ENCODE measurements at regions of chr7 and their contacts with region 1.

Region 1: GRCh38 chr7:139777948-139778841 is at the start of gene HIPK2:
- DNase-seq: peak; percentile 87 to 92
- ATAC-seq: peak; percentile 76 to 81 (median 78)
- H3K4me3 ChIP-seq: peak within 1 kb of the TSS; percentile 95
- H3K27ac ChIP-seq: peak within 1 kb of the TSS; percentile 93
- H3K4me1 ChIP-seq: peaks cover 33% of the 10 kb centered on the region
- H3K27me3 ChIP-seq: no peaks in the 10 kb centered on the region
- CTCF ChIP-seq: no peak
- total RNA-seq, gene HIPK2: 74.7 to 166 (median 99.6) TPM

Region 2: GRCh38 chr7:139598445-139599049 is 179.6 kb before region 1 on chr7:
- intact Hi-C with region 1: no loop called
- DNase-seq: no peak
- ATAC-seq: no peak
- H3K4me3 ChIP-seq: no peak overlapping the region
- H3K27ac ChIP-seq: no peak overlapping the region
- H3K4me1 ChIP-seq: no peaks in the 10 kb centered on the region
- H3K27me3 ChIP-seq: no peaks in the 10 kb centered on the region
- CTCF ChIP-seq: no peak

Region 3: DNA sequence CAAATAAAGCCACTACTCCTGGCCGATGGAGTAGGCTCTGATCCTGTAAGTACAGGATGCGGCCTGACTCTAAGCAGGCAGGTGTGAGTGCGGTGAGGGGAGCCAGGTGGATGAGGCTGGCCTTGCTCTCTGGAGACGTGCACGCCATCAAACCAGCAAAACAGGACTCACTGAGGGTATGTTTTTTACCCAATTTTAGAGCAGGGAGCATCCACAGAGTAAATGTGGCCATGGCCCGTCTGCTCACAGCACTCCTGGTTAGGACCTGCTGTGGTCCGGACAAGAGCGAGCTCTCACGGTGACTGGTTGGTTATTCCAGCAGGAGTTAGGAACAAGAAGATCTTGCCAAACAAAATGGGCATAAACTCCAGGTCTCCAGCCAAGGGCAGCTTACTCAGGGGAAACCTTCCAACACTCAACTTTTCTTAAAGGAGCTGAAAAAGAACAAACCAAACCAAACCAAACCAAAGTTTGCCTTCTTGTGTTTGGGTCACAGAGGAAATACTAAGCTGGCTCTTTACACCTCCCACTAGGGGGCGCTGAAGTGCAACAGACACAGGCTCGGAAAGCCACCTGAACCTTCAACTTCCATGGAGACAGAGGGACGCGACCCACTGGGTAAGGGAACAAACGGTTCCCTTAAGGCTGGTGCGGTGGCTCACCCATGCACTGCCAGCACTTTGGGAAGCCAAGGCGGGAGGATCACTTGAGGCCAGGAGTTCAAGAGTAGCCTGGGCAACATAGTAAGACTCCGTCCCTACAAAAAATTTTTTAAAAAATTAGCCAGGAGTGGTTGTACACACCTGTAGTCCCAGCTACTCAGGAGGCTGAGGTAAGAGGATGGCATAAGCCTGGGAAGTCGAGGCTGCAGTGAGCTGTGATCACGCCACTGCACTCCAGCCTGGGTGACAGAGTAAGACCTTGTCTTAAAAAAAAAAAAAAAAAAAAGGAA is 132.3 kb before region 1 on chr7:
- intact Hi-C with region 1: loop called (anchors 2 to 5 kb)
- DNase-seq: peak; percentile 82 to 89
- ATAC-seq: peak; percentile 79 to 87 (median 83)
- H3K4me3 ChIP-seq: no peak overlapping the region
- H3K27ac ChIP-seq: no peak overlapping the region
- H3K4me1 ChIP-seq: peaks cover 25% of the 10 kb centered on the region
- H3K27me3 ChIP-seq: no peaks in the 10 kb centered on the region
- CTCF ChIP-seq: peak; percentile 92

Region 4: GRCh38 chr7:139739863-139740597 is 38.2 kb before region 1 on chr7:
- intact Hi-C with region 1: loop called (anchors 5 kb)
- DNase-seq: peak in 1 of 2 donors; percentile 60
- ATAC-seq: peak; percentile 45 to 58 (median 50)
- H3K4me3 ChIP-seq: peak overlapping the region; percentile 28
- H3K27ac ChIP-seq: peak overlapping the region; percentile 89
- H3K4me1 ChIP-seq: peaks cover 96% of the 10 kb centered on the region
- H3K27me3 ChIP-seq: no peaks in the 10 kb centered on the region
- CTCF ChIP-seq: no peak